HCT116 (cell line): ENCODE measurements at regions of chrX and their contacts with region 1.

Region 1: DNA sequence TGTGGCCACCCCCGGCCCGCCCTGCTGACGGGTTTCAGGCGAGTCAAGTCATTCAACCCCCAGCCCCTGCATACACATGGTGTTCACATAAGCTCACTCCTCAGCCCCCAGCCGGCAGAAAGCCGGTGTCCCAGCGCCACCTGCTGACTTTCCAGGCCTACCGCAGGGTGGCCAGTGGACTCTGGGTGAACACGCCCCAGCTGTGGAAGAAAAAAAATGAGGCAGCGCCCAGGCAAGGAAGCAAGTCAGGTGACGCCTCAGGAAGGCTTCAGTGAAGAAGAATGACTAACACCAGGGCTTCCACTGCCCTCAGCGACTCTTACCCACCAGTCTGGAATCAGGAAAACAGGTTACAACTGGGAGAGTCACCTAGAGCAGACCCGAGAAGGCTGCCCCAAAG is 15.8 kb downstream of the BCAP31 start:
- DNase-seq: no peak
- ATAC-seq: peak; percentile 93
- H3K4me3 ChIP-seq: no peak overlapping the region
- H3K27ac ChIP-seq: peak overlapping the region; percentile 53
- H3K4me1 ChIP-seq: peaks cover 0 to 7% of the 10 kb centered on the region in 2 experiments; a peak in 1 of 4 replicates
- H3K27me3 ChIP-seq: no peaks in the 10 kb centered on the region
- CTCF ChIP-seq: peak; percentile 51 to 76 (median 62)
- POLR2A ChIP-seq: no peak
- RAD21 ChIP-seq: peak; percentile 73

Region 2: DNA sequence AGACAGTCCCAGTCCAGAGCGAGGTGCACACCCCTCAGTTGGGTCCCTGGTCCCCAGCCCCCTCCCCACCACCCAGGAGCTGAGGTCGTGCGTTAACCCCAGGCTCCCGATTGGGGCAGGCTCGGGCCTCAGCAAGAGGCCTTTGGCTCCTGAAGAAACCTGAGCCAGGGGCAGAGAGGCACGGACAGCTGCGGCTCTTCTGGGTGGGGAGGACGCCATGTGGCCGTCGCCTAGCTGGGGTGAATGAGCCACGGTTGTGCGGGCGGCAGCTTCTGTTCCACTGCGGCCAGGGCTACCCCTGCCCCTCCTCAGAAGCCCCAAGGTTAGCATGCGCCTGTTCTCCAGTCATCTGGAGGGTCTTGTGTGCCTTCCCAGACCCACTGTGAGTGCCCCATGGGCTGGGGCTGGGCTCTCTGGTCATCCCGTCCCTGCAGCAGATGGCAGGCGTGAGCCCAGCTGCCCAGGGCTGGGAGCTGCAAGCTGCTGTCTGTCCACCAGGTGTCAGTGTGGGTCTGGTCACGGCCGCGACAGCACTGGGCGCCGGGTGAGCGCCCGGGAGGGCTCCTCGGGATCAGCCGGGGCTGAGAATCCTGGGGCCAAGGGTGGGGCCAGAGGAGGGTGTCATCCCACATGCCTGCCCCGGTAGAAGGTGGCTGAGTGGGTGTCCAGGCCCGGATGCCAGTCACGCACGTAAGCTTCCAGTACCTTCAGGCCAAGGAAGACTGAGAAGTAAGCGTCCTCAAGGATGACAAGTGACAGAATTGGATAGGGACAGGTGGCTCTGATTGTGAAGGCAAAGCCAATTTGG is 169.0 kb before region 1 on chrX:
- CTCF ChIA-PET with region 1: interaction called, 11 read pairs
- POLR2A ChIA-PET with region 1: no interaction called
- RAD21 ChIA-PET with region 1: no interaction called
- intact Hi-C with region 1: no loop called
- DNase-seq: peak; percentile 24
- ATAC-seq: peak; percentile 96
- H3K4me3 ChIP-seq: no peak overlapping the region
- H3K27ac ChIP-seq: no peak overlapping the region
- H3K4me1 ChIP-seq: peaks cover 0 to 5% of the 10 kb centered on the region in 2 experiments; a peak in 1 of 4 replicates
- H3K27me3 ChIP-seq: no peaks in the 10 kb centered on the region
- CTCF ChIP-seq: peak in 2 of 3 experiments; percentile 75 to 87; a peak in 4 of 6 replicates
- POLR2A ChIP-seq: no peak
- RAD21 ChIP-seq: no peak

Region 3: DNA sequence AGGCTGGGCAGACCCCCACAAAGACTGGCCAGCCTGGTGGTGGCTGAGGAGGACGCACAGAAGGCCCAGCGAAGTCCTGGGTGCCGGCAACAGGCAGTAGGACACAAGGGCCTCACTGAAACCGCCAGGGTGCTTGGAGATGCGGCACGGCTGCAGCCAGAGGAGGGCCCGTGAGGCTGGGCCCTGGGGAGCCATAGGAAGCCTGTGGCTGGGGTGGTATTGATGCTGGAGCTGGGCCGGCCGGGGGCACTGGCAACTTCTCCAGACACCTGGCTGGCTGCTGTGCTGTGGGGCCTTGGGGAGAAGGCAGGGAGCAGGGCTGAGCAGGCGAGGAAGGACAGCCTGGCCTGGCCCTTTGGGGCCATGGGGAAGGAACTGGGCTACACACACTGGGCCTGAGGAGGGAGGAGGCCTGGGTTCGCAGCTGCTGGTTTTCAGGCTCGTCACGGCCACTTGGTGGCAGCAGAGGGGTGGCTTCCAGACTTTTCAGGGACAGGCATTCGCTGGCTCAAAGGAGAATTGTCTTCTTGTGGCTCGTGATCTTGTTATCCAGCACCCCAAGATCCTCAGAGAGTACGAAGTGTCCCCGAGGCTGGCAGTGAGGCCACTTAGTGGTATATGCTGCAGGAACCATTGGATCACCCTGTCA is 153.8 kb before region 1 on chrX:
- CTCF ChIA-PET with region 1: interaction called, 4 read pairs
- POLR2A ChIA-PET with region 1: no interaction called
- RAD21 ChIA-PET with region 1: no interaction called
- intact Hi-C with region 1: loop called (anchors 5 kb)
- DNase-seq: peak; percentile 24
- ATAC-seq: peak; percentile 93
- H3K4me3 ChIP-seq: no peak overlapping the region
- H3K27ac ChIP-seq: no peak overlapping the region
- H3K4me1 ChIP-seq: no peaks in the 10 kb centered on the region
- H3K27me3 ChIP-seq: no peaks in the 10 kb centered on the region
- CTCF ChIP-seq: peak; percentile 56 to 75 (median 59)
- POLR2A ChIP-seq: no peak
- RAD21 ChIP-seq: peak; percentile 74

Region 4: DNA sequence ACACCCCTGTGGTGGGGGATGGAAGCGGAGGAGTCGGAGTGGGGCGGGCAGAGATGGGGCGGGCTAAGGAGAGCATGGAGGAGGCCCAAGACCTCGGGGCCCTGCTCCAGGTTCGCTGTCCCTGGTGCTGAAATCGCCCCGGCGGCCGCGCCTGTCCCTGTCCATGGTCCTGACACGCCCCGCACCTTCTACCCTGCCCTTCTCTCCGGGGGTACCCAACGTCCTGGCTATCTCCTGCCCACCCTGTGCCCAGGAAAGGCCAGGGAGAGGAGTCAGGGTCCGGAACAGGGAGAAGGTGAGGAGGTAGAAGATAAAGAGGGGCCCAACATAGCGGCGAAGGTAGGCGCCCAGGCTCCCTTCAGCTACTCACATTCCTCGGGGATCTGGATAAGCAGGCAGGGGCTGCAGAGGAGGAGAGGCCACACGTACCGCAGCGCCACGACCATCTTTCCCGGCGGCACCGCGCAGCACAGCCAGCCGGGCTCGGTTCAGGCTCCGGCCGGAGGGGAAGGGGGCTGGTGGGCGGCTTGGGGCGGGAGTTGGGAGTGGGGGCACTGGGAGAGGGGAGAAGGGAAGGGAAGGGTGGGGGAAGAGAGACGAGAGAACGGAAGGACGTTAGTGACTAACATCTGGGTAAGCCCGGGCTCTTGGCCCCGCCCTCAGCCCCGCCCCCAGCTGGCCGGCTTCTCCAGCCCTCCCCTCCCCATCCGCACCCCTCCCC is 167.1 kb after region 1 on chrX:
- CTCF ChIA-PET with region 1: no interaction called
- POLR2A ChIA-PET with region 1: no interaction called
- RAD21 ChIA-PET with region 1: no interaction called
- intact Hi-C with region 1: no loop called
- DNase-seq: no peak
- ATAC-seq: peak; percentile 60
- H3K4me3 ChIP-seq: no peak overlapping the region
- H3K27ac ChIP-seq: no peak overlapping the region
- H3K4me1 ChIP-seq: no peaks in the 10 kb centered on the region
- H3K27me3 ChIP-seq: no peaks in the 10 kb centered on the region
- CTCF ChIP-seq: no peak
- POLR2A ChIP-seq: no peak
- RAD21 ChIP-seq: no peak